Body of pancreas (tissue), 4 donors: ENCODE measurements at regions of chr2 and their contacts with region 1.

Region 1: GRCh38 chr2:231900486-231900942 is 25.7 kb downstream of the NPPC start:
- DNase-seq: peak; percentile 82 to 89 (median 86)
- ATAC-seq: peak; percentile 85
- H3K4me3 ChIP-seq: no peak overlapping the region
- H3K27ac ChIP-seq: no peak overlapping the region
- H3K4me1 ChIP-seq: peaks cover 6% of the 10 kb centered on the region
- H3K27me3 ChIP-seq: no peaks in the 10 kb centered on the region
- CTCF ChIP-seq: peak; percentile 70 to 88 (median 78)
- POLR2A ChIP-seq: no peak

Region 2: DNA sequence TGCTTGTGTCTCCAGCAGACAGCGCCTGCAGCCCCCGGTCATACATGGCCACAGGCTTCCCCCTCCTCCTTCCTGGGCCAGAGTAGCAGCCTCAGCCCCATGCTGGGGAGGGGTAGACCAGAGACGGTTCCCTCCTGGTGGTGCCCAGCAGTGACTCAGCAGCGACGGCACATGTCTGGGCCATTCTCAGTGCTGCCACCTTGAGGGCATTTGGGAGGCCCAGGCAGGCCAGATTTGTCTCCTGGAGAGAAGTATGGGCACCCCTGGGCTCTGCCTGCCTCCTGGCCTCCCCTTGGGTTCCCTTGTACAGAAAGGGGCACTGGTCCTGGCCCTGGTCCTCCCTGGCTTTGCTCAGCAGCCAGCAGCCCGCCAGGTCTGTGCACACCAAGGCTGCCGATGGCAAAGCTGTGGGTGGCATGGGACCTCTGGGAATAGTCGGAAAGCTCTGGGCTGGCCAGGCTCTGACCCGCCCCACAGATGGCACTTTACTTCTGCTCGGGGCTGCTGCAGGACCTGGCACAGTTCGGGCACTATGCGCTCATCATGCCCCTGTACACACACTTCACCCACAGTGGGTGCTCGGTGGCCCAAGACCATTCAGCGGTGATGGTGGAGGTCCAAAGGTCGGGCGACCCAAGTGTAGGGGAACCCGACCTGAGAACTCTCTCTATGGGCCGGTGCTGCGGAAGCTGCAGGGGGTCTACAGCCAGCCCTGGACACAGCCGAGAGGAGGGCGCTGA is 544.1 kb after region 1 on chr2:
- intact Hi-C with region 1: loop called (anchors 10 kb)
- DNase-seq: peak; percentile 56 to 62 (median 60)
- ATAC-seq: no peak
- H3K4me3 ChIP-seq: no peak overlapping the region
- H3K27ac ChIP-seq: no peak overlapping the region
- H3K4me1 ChIP-seq: peaks cover 13% of the 10 kb centered on the region
- H3K27me3 ChIP-seq: no peaks in the 10 kb centered on the region
- CTCF ChIP-seq: peak; percentile 22 to 48 (median 43)
- POLR2A ChIP-seq: no peak

Region 3: DNA sequence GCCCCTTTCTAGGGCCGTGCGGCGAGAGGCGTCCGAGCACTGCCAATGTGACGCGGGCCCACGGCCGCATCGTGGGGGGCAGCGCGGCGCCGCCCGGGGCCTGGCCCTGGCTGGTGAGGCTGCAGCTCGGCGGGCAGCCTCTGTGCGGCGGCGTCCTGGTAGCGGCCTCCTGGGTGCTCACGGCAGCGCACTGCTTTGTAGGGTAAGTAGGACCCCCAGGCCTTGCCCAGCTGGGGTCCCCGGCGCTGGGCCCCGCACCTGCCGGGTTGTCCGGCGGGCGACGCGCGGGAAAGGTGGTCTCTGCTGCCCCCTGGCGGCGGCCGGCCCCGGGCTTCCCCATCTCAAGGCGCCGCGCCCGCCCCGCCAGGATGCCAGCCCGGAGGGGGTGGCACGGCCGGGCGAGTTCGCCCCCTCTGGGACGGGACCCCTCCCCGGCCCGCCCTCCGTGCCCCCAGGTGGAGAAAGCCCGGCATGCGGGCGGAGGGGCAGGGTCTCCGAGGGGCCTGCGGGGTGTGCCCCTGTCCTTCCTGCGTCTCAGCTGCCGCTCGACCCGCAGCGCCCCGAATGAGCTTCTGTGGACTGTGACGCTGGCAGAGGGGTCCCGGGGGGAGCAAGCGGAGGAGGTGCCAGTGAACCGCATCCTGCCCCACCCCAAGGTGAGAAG is 621.6 kb after region 1 on chr2:
- intact Hi-C with region 1: loop called (anchors 10 kb)
- DNase-seq: peak; percentile 40 to 73 (median 64)
- ATAC-seq: peak; percentile 57
- H3K4me3 ChIP-seq: no peak overlapping the region
- H3K27ac ChIP-seq: no peak overlapping the region
- H3K4me1 ChIP-seq: peaks cover 31% of the 10 kb centered on the region
- H3K27me3 ChIP-seq: peaks cover 0 to 34% of the 10 kb centered on the region in 2 donors
- CTCF ChIP-seq: peak; percentile 45 to 97 (median 80)
- POLR2A ChIP-seq: no peak